Activated CD4-positive, alpha-beta memory T cell treated with anti-CD3 and anti-CD28 coated beads for 36 hours (primary cell): ENCODE measurements at regions of chr2 and their contacts with region 1.

Region 1: GRCh38 chr2:112749755-112750559 is 14.5 kb downstream of the CKAP2L start:
- DNase-seq: peak; percentile 90
- H3K4me3 Mint-ChIP-seq: peak overlapping the region; percentile 12
- H3K27ac Mint-ChIP-seq: peak overlapping the region; percentile 44
- H3K4me1 Mint-ChIP-seq: peaks cover 21% of the 10 kb centered on the region
- H3K27me3 Mint-ChIP-seq: no peaks in the 10 kb centered on the region

Region 2: GRCh38 chr2:112626604-112627059 is 123.3 kb before region 1 on chr2:
- CTCF ChIA-PET with region 1: interaction called, 13 read pairs
- POLR2A ChIA-PET with region 1: no interaction called
- intact Hi-C with region 1: no loop called
- DNase-seq: peak; percentile 79
- H3K4me3 Mint-ChIP-seq: peak overlapping the region; percentile 46
- H3K27ac Mint-ChIP-seq: peak overlapping the region; percentile 88
- H3K4me1 Mint-ChIP-seq: peaks cover 67% of the 10 kb centered on the region
- H3K27me3 Mint-ChIP-seq: peaks cover 2% of the 10 kb centered on the region

Region 3: DNA sequence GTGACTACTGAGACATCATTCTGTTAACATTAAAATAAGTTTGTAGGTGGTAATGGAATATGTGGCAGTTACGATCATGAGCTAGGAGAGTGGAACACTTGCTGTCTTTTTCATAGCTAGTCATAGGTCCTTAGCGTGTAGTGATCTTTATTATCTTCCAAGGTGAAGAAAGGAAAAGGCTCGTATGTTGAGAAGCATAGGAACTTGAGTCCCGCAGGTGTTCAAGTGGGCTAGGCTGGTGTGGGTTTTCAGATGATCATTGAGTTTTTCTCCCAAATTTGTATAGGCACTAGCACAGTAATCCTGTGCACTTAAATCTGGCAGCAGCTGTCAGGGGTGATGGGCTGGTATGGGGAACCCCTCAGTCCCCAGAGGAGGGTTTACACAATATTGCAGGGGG is 93.3 kb before region 1 on chr2:
- CTCF ChIA-PET with region 1: no interaction called
- POLR2A ChIA-PET with region 1: no interaction called
- intact Hi-C with region 1: no loop called
- DNase-seq: no peak
- H3K4me3 Mint-ChIP-seq: no peak overlapping the region
- H3K27ac Mint-ChIP-seq: no peak overlapping the region
- H3K4me1 Mint-ChIP-seq: peaks cover 73% of the 10 kb centered on the region
- H3K27me3 Mint-ChIP-seq: no peaks in the 10 kb centered on the region

Region 4: GRCh38 chr2:112679484-112679883 is 70.5 kb before region 1 on chr2:
- CTCF ChIA-PET with region 1: no interaction called
- POLR2A ChIA-PET with region 1: no interaction called
- intact Hi-C with region 1: no loop called
- DNase-seq: no peak
- H3K4me3 Mint-ChIP-seq: no peak overlapping the region
- H3K27ac Mint-ChIP-seq: no peak overlapping the region
- H3K4me1 Mint-ChIP-seq: peaks cover 7% of the 10 kb centered on the region
- H3K27me3 Mint-ChIP-seq: peaks cover 2% of the 10 kb centered on the region

Region 5: GRCh38 chr2:112764071-112765044 is 14.4 kb after region 1 on chr2 and contains the start of gene CKAP2L:
- CTCF ChIA-PET with region 1: interaction called, 15 read pairs
- POLR2A ChIA-PET with region 1: no interaction called
- intact Hi-C with region 1: loop called (anchors 1 kb)
- DNase-seq: peak; percentile 98
- H3K4me3 Mint-ChIP-seq: peak within 1 kb of the TSS; percentile 90
- H3K27ac Mint-ChIP-seq: peak within 1 kb of the TSS; percentile 85
- H3K4me1 Mint-ChIP-seq: peaks cover 31% of the 10 kb centered on the region
- H3K27me3 Mint-ChIP-seq: no peaks in the 10 kb centered on the region
- total RNA-seq, gene CKAP2L: 42.1 to 46.1 TPM

Region 6: GRCh38 chr2:112884869-112885505 is 135.0 kb after region 1 on chr2:
- CTCF ChIA-PET with region 1: interaction called, 202 read pairs
- POLR2A ChIA-PET with region 1: interaction called, 4 read pairs
- intact Hi-C with region 1: loop called (anchors 1 kb)
- DNase-seq: peak; percentile 86
- H3K4me3 Mint-ChIP-seq: no peak overlapping the region
- H3K27ac Mint-ChIP-seq: peak overlapping the region; percentile 6
- H3K4me1 Mint-ChIP-seq: peaks cover 27% of the 10 kb centered on the region
- H3K27me3 Mint-ChIP-seq: no peaks in the 10 kb centered on the region

Region 7: DNA sequence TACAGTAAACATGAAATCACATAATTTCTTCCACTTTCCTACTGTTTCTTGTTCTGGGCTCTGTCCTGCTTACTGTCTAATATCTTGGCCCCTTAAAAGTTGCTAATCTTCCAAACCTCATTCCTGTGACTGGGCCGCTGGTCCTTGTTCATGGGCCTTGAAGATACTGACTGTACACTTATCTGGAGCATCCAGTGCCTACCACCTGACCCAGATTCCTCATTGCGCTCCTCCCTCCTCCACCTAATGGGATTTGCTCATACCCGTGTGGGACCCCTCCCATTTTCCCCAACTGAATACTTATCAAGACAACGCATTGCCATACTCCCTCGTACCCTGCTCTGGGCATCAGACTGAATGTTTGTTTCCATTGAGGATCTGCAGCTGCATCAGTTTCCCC is 154.9 kb after region 1 on chr2:
- CTCF ChIA-PET with region 1: interaction called, 14 read pairs
- POLR2A ChIA-PET with region 1: no interaction called
- intact Hi-C with region 1: no loop called
- DNase-seq: no peak
- H3K4me3 Mint-ChIP-seq: no peak overlapping the region
- H3K27ac Mint-ChIP-seq: no peak overlapping the region
- H3K4me1 Mint-ChIP-seq: no peaks in the 10 kb centered on the region
- H3K27me3 Mint-ChIP-seq: peaks cover 3% of the 10 kb centered on the region

Region 8: GRCh38 chr2:112958428-112959108 is 208.6 kb after region 1 on chr2:
- CTCF ChIA-PET with region 1: interaction called, 15 read pairs
- POLR2A ChIA-PET with region 1: no interaction called
- intact Hi-C with region 1: no loop called
- DNase-seq: peak; percentile 37
- H3K4me3 Mint-ChIP-seq: no peak overlapping the region
- H3K27ac Mint-ChIP-seq: no peak overlapping the region
- H3K4me1 Mint-ChIP-seq: no peaks in the 10 kb centered on the region
- H3K27me3 Mint-ChIP-seq: no peaks in the 10 kb centered on the region

Region 9: GRCh38 chr2:112996635-112997034 is 246.7 kb after region 1 on chr2:
- CTCF ChIA-PET with region 1: no interaction called
- POLR2A ChIA-PET with region 1: no interaction called
- intact Hi-C with region 1: no loop called
- DNase-seq: peak; percentile 84
- H3K4me3 Mint-ChIP-seq: no peak overlapping the region
- H3K27ac Mint-ChIP-seq: peak overlapping the region; percentile 30
- H3K4me1 Mint-ChIP-seq: peaks cover 28% of the 10 kb centered on the region
- H3K27me3 Mint-ChIP-seq: no peaks in the 10 kb centered on the region

Region 10: GRCh38 chr2:113018509-113018908 is 268.6 kb after region 1 on chr2:
- CTCF ChIA-PET with region 1: no interaction called
- POLR2A ChIA-PET with region 1: no interaction called
- intact Hi-C with region 1: no loop called
- DNase-seq: no peak
- H3K4me3 Mint-ChIP-seq: no peak overlapping the region
- H3K27ac Mint-ChIP-seq: no peak overlapping the region
- H3K4me1 Mint-ChIP-seq: peaks cover 4% of the 10 kb centered on the region
- H3K27me3 Mint-ChIP-seq: peaks cover 14% of the 10 kb centered on the region